ENCODE measurements at regions of chr11 and their contacts with region 1.

Region 1: GRCh38 chr11:100830978-100831732 is 144.1 kb downstream of the ARHGAP42 start:
- DNase-seq: peak in 1 of 2 donors; percentile 33
- ATAC-seq: peak; percentile 34 to 66
- H3K4me3 ChIP-seq: no peak overlapping the region
- H3K27ac ChIP-seq: peak overlapping the region; percentile 53 to 85 (median 58)
- H3K4me1 ChIP-seq: peaks cover 21 to 31% of the 10 kb centered on the region in 2 donors
- H3K27me3 ChIP-seq: no peaks in the 10 kb centered on the region
- CTCF ChIP-seq: no peak
- POLR2A ChIP-seq: no peak

Region 2: GRCh38 chr11:100789500-100789899 is 41.7 kb before region 1 on chr11:
- in situ Hi-C with region 1: no loop called
- intact Hi-C with region 1: loop called (anchors 2 kb)
- DNase-seq: peak; percentile 73 to 78
- ATAC-seq: peak; percentile 96 to 97
- H3K4me3 ChIP-seq: no peak overlapping the region
- H3K27ac ChIP-seq: peak overlapping the region; percentile 43 to 74 (median 60)
- H3K4me1 ChIP-seq: peaks cover 24 to 31% of the 10 kb centered on the region in 2 donors
- H3K27me3 ChIP-seq: no peaks in the 10 kb centered on the region
- CTCF ChIP-seq: no peak
- POLR2A ChIP-seq: no peak

Measured in gastrocnemius medialis (tissue), 4 donors.